CD4-positive, alpha-beta memory T cell (primary cell): ENCODE measurements at regions of chr4 and their contacts with region 1.

Region 1: GRCh38 chr4:87150498-87151261 is 69.7 kb downstream of the KLHL8 start:
- DNase-seq: peak; percentile 41 to 65 (median 54)
- H3K4me3 ChIP-seq: no peak overlapping the region
- H3K4me3 Mint-ChIP-seq: no peak overlapping the region
- H3K27ac ChIP-seq: no peak overlapping the region
- H3K27ac Mint-ChIP-seq: no peak overlapping the region
- H3K4me1 ChIP-seq: no peaks in the 10 kb centered on the region
- H3K4me1 Mint-ChIP-seq: peaks cover 0 to 4% (median 0%) of the 10 kb centered on the region in 4 donors
- H3K27me3 ChIP-seq: no peaks in the 10 kb centered on the region
- H3K27me3 Mint-ChIP-seq: no peaks in the 10 kb centered on the region

Region 2: DNA sequence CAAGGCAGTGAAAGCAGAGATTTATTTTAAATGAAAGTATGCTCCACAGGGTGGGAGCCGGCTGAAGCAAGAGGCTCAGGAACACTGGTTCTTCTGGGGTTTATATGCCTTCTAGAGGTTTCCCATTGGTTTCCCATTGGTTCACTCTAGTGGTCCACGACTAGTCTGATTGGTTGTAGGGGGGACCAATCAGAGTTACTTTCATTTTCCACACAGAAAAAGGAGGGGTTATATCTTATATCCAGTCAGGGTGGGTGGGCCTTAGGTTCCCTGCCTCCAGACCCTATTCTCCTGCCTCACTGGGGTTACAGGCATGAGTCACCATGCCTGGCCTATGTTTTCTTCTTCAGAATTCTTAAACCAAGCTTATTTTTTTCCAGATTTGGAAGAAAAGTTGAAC is 31.9 kb before region 1 on chr4:
- CTCF ChIA-PET with region 1: interaction called, 13 read pairs
- POLR2A ChIA-PET with region 1: no interaction called
- intact Hi-C with region 1: no loop called
- DNase-seq: no peak
- H3K4me3 ChIP-seq: no peak overlapping the region
- H3K4me3 Mint-ChIP-seq: no peak overlapping the region
- H3K27ac ChIP-seq: no peak overlapping the region
- H3K27ac Mint-ChIP-seq: peak overlapping the region in 5 of 7 donors; percentile 17 to 41 (median 24)
- H3K4me1 ChIP-seq: peaks cover 15% of the 10 kb centered on the region
- H3K4me1 Mint-ChIP-seq: peaks cover 16 to 46% (median 23%) of the 10 kb centered on the region in 4 donors
- H3K27me3 ChIP-seq: no peaks in the 10 kb centered on the region
- H3K27me3 Mint-ChIP-seq: no peaks in the 10 kb centered on the region

Region 3: DNA sequence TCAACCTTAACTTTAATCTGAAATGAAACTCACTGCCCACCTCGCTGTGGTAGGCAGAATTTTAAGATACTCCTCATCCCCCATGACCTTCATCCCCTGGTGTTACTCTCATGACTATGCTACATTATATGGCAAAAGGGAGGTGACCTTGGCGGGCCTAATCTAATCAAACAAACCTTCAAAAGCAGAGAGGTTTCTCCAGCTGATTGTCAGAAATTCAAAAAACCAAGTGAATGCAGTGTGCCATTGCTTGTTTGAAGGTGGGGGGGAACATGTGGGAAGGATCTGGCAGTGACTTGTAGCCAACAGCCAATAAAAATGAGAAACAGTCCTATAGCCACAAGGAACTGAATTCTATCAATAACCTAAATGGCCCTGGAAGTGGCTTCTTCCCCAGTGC is 21.3 kb after region 1 on chr4:
- CTCF ChIA-PET with region 1: interaction called, 15 read pairs
- POLR2A ChIA-PET with region 1: no interaction called
- intact Hi-C with region 1: no loop called
- DNase-seq: no peak
- H3K4me3 ChIP-seq: no peak overlapping the region
- H3K4me3 Mint-ChIP-seq: no peak overlapping the region
- H3K27ac ChIP-seq: no peak overlapping the region
- H3K27ac Mint-ChIP-seq: no peak overlapping the region
- H3K4me1 ChIP-seq: no peaks in the 10 kb centered on the region
- H3K4me1 Mint-ChIP-seq: peaks cover 0 to 1% (median under 1%) of the 10 kb centered on the region in 4 donors
- H3K27me3 ChIP-seq: no peaks in the 10 kb centered on the region
- H3K27me3 Mint-ChIP-seq: no peaks in the 10 kb centered on the region

Region 4: DNA sequence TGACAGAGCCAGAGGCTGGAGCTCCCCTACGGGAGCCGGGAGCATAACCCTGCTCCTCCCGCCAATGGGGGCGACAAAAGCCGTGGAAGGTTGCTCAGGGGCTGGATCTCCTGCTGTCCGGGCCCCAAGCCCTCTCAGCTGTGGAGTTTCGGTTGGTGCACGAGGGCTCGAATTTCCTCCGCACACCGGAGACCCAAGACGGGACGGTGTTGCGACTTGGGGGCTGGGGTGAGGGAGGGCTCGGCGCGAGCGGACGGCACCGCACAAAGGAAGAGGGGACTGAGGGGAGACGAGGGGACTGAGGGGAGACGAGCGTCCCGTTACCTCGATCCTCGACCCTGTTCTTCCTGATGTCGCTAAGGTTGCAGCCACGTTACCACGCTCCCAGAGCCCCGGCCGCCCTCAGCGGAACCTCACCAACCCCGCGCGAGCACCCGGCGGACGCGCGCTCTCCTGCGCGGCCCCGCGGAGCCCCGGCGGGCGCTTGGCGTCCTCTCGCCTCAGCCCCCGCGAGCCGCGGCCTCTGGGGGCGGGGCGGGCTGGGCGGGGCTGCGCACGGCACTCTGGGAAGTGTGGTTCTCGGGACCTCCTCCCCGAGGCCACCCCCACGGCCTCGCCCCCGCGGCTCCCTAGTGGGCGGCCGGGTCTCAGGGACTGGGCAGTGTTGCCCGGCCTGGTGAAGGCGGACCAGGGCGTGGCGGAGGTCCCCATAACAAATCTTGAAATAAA is 69.6 kb after region 1 on chr4 and contains the start of gene KLHL8:
- CTCF ChIA-PET with region 1: interaction called, 11 read pairs
- POLR2A ChIA-PET with region 1: no interaction called
- intact Hi-C with region 1: no loop called
- DNase-seq: peak; percentile 84 to 91 (median 90)
- H3K4me3 ChIP-seq: peak within 1 kb of the TSS; percentile 82 to 89
- H3K4me3 Mint-ChIP-seq: peak within 1 kb of the TSS; percentile 91 to 98 (median 95)
- H3K27ac ChIP-seq: peak within 1 kb of the TSS; percentile 85
- H3K27ac Mint-ChIP-seq: peak within 1 kb of the TSS; percentile 81 to 96 (median 94)
- H3K4me1 ChIP-seq: peaks cover 16% of the 10 kb centered on the region
- H3K4me1 Mint-ChIP-seq: peaks cover 9 to 23% (median 16%) of the 10 kb centered on the region in 4 donors
- H3K27me3 ChIP-seq: no peaks in the 10 kb centered on the region
- H3K27me3 Mint-ChIP-seq: no peaks in the 10 kb centered on the region
- total RNA-seq, gene KLHL8: 11.0 to 11.4 TPM

Region 5: GRCh38 chr4:87227751-87228151 is 77.1 kb after region 1 on chr4:
- CTCF ChIA-PET with region 1: interaction called, 108 read pairs
- POLR2A ChIA-PET with region 1: no interaction called
- intact Hi-C with region 1: no loop called
- DNase-seq: no peak
- H3K4me3 ChIP-seq: no peak overlapping the region
- H3K4me3 Mint-ChIP-seq: no peak overlapping the region
- H3K27ac ChIP-seq: no peak overlapping the region
- H3K27ac Mint-ChIP-seq: no peak overlapping the region
- H3K4me1 ChIP-seq: no peaks in the 10 kb centered on the region
- H3K4me1 Mint-ChIP-seq: no peaks in the 10 kb centered on the region
- H3K27me3 ChIP-seq: no peaks in the 10 kb centered on the region
- H3K27me3 Mint-ChIP-seq: peaks cover 0 to 3% of the 10 kb centered on the region in 2 donors

Region 6: DNA sequence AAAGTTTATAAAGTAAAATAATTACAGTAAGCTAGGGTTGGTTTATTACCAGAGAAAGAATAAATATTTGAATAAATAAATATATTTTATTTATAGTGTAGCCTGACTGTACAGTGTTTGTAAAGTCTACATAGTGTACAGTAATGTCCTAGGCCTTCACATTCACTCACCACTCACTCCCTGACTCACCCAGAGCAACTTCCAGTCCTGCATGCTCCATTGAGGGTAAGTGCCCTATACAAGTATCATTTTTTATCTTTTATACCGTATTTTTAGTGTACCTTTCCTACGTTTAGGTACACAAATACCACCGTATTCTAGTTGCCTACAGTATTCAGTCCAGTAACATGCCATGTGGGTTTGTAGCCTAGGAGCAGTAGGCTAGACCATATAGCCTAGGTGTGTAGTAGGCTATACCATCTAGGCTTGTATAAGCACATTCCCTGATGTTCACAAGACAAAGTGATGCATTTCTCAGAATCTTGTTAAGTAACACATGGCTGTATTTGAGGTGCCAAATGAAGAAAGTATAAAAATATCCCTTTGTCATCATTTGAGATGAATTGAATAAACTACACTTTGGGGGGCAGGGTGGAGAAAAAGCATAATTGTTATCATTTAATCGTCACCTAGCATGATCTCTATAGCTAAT is 84.5 kb after region 1 on chr4:
- CTCF ChIA-PET with region 1: interaction called, 108 read pairs
- POLR2A ChIA-PET with region 1: interaction called, 3 read pairs
- intact Hi-C with region 1: loop called (anchors 1 kb)
- DNase-seq: no peak
- H3K4me3 ChIP-seq: peak overlapping the region in 1 of 2 donors; percentile 47
- H3K4me3 Mint-ChIP-seq: peak overlapping the region in 6 of 8 donors; percentile 80 to 92 (median 84)
- H3K27ac ChIP-seq: no peak overlapping the region
- H3K27ac Mint-ChIP-seq: peak overlapping the region in 2 of 7 donors; percentile 1 to 50
- H3K4me1 ChIP-seq: peaks cover 5% of the 10 kb centered on the region
- H3K4me1 Mint-ChIP-seq: peaks cover 0 to 7% (median under 1%) of the 10 kb centered on the region in 4 donors
- H3K27me3 ChIP-seq: peaks cover 4% of the 10 kb centered on the region
- H3K27me3 Mint-ChIP-seq: peaks cover 2 to 6% of the 10 kb centered on the region in 2 donors